Naive thymus-derived CD8-positive, alpha-beta T cell (primary cell): ENCODE measurements at regions of chr17 and their contacts with region 1.

Region 1: GRCh38 chr17:58517734-58518609 is 3.5 kb upstream of the MTMR4 start:
- DNase-seq: peak; percentile 94 to 100 (median 100)
- ATAC-seq: peak; percentile 81 to 84
- H3K4me3 Mint-ChIP-seq: peak overlapping the region; percentile 77 to 98 (median 96)
- H3K27ac Mint-ChIP-seq: peak overlapping the region; percentile 91 to 98 (median 92)
- H3K4me1 Mint-ChIP-seq: peaks cover 31 to 54% (median 41%) of the 10 kb centered on the region in 4 donors
- H3K27me3 Mint-ChIP-seq: no peaks in the 10 kb centered on the region

Region 2: GRCh38 chr17:58337600-58338453 is 180.1 kb before region 1 on chr17:
- POLR2A ChIA-PET with region 1: interaction called, 15 read pairs
- DNase-seq: peak; percentile 74 to 95 (median 88)
- ATAC-seq: peak; percentile 67 to 79
- H3K4me3 Mint-ChIP-seq: peak overlapping the region; percentile 82 to 100 (median 96)
- H3K27ac Mint-ChIP-seq: peak overlapping the region; percentile 91 to 99 (median 96)
- H3K4me1 Mint-ChIP-seq: peaks cover 49 to 89% (median 75%) of the 10 kb centered on the region in 4 donors
- H3K27me3 Mint-ChIP-seq: no peaks in the 10 kb centered on the region

Region 3: DNA sequence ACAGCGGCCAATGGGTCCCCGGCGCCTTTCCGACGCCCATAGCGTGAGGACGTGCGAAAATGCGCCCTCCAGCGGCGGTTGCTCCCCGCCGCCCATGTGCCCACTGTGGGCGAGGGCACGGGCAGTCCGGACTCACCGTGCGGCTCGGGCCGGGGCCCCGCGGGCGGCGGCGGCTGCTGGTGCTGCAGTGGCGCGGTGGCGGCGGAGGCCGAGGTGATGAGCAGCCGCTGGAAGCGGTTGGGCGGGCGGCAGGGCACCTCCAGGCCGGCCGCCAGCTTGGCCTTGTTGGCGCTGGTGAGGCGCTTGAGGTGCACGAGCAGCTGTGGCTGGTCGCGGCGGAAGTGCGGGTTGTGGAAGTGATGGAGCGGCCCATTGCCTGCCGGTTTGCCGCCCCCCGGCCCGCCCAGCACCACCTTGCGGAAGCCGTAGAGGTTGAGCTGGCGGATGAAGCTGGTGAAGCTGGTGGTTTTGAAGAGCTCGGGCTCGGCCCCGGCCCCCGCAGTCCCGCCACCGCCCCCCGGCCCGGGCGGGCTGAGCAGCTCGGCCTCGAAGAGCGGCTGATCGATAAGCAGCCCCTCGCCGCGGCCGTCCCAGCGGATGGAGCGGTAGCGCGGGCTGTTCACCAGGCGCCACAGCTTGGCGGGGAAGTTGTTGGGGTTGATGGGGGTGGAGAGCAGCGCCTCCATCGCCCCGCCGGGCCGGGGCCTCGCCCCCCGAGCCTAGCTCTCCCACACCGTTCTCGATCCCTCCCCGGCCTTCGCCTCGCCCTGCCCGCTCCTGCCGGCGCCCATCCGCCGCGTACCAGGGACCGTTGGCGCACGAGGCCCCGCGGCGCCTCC is 30.2 kb before region 1 on chr17 and contains the start of gene HSF5:
- POLR2A ChIA-PET with region 1: interaction called, 13 read pairs
- DNase-seq: peak; percentile 61 to 89 (median 76)
- ATAC-seq: peak; percentile 94 to 96
- H3K4me3 Mint-ChIP-seq: peak within 1 kb of the TSS; percentile 41 to 82 (median 69)
- H3K27ac Mint-ChIP-seq: peak within 1 kb of the TSS in 9 of 10 donors; percentile 47 to 88 (median 56)
- H3K4me1 Mint-ChIP-seq: peaks cover 5 to 22% (median 8%) of the 10 kb centered on the region in 4 donors
- H3K27me3 Mint-ChIP-seq: no peaks in the 10 kb centered on the region
- polyA plus RNA-seq, gene HSF5: 0.14 to 1.8 (median 0.73) TPM

Region 4: DNA sequence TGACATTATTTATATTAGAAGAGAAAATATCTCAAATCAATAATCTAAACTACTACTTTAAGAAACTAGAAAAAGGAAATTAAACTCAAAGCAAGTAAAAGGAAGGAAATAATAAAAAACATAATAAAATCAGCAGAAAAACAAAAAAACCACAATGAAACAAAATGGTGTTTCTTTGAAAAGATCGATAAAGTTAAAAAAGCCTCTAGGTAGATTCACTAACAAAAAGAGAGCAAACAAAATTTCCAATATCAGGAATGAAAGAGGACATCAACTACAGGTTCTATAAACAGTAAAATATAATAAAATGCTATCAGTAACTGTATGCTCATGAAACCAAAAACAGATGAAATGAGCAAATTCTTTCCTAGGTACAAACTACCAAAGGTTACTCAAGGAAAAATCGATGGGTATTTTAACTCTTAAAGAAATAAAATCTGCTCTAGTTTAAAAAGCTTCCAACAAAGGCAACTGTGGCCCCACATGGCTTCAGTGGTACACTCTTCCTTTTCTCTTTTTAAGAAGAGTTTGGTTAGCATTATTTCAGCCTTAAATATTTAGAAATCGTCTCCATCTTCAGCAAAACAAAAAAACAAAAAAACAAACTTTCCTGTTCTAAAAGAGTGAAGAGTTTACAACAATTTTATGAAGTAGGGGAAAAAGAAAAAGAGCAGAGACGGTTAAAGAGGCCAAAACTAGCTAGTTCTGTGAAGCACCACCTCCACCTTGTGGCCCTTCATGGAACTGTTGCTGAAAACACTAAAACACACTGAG is 486.6 kb after region 1 on chr17:
- POLR2A ChIA-PET with region 1: interaction called, 21 read pairs
- DNase-seq: peak; percentile 37 to 81 (median 67)
- ATAC-seq: peak; percentile 18 to 39
- H3K4me3 Mint-ChIP-seq: peak overlapping the region in 1 of 10 donors; percentile 46
- H3K27ac Mint-ChIP-seq: peak overlapping the region; percentile 37 to 99 (median 78)
- H3K4me1 Mint-ChIP-seq: peaks cover 4 to 32% (median 9%) of the 10 kb centered on the region in 4 donors
- H3K27me3 Mint-ChIP-seq: no peaks in the 10 kb centered on the region